ENCODE measurements at regions of chr3 and their contacts with region 1.

Region 1: GRCh38 chr3:18533039-18533438 is 107.9 kb upstream of the SATB1 start:
- DNase-seq: no peak
- H3K4me3 Mint-ChIP-seq: no peak overlapping the region
- H3K27ac Mint-ChIP-seq: no peak overlapping the region
- H3K4me1 Mint-ChIP-seq: peaks cover 2% of the 10 kb centered on the region
- H3K27me3 Mint-ChIP-seq: no peaks in the 10 kb centered on the region

Region 2: DNA sequence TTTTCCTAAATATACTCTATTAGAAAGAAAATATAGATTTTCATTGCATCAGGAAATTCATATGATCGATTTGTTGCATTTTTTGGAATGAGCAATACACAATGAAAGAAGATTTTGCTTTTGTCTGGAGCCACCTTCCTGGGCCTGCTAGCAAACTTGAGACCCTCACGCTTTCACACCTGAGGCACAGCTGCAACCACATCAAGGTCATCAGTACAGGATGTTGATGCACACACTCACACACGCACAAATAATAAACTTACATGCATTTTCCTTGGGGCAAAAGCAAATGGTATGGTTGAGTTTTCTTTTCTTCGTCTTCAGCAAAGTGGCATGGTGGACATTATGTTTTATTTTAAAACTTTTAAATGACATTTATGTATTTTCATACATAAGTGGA is 43.1 kb before region 1 on chr3:
- CTCF ChIA-PET with region 1: no interaction called
- intact Hi-C with region 1: no loop called
- DNase-seq: peak; percentile 60
- H3K4me3 Mint-ChIP-seq: no peak overlapping the region
- H3K27ac Mint-ChIP-seq: no peak overlapping the region
- H3K4me1 Mint-ChIP-seq: peaks cover 18% of the 10 kb centered on the region
- H3K27me3 Mint-ChIP-seq: no peaks in the 10 kb centered on the region

Region 3: GRCh38 chr3:18546632-18547031 is 13.6 kb after region 1 on chr3:
- CTCF ChIA-PET with region 1: no interaction called
- intact Hi-C with region 1: loop called (anchors 1 kb)
- DNase-seq: no peak
- H3K4me3 Mint-ChIP-seq: no peak overlapping the region
- H3K27ac Mint-ChIP-seq: no peak overlapping the region
- H3K4me1 Mint-ChIP-seq: no peaks in the 10 kb centered on the region
- H3K27me3 Mint-ChIP-seq: no peaks in the 10 kb centered on the region

Region 4: DNA sequence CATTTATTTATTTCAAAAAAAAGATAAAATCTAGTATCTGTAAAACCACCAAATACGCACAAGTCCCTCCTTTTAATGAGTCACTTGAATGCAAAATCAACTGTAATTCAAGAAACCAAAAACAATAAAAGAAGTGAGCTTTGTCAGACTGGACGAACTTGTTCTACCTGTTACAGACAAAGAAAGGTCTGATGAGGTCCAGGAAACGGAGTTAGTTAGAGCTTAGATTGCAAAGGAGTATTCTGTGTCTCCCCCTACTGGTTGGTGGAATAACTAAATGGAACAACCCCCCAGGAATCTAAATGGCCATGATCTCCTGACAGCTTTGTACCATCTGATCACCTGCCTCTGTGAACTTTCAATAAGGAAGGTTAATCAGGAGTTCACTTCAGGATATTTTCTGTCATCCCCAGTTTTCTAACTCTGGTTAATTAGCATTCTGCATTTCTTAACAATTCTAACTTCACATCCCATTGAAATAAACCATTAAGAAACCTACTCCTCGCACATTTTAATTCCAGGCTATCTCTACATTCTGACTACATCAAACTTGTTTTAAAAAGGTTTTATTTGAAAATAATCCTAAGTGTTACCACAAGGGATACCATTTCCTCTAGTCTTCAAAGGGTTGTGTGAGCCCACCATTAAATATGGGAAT is 225.1 kb after region 1 on chr3:
- CTCF ChIA-PET with region 1: no interaction called
- intact Hi-C with region 1: no loop called
- DNase-seq: peak; percentile 38
- H3K4me3 Mint-ChIP-seq: no peak overlapping the region
- H3K27ac Mint-ChIP-seq: peak overlapping the region; percentile 57
- H3K4me1 Mint-ChIP-seq: peaks cover 43% of the 10 kb centered on the region
- H3K27me3 Mint-ChIP-seq: no peaks in the 10 kb centered on the region